ENCODE measurements at regions of chr22 and their contacts with region 1.

Region 1: GRCh38 chr22:30116362-30117117 is 36.3 kb downstream of the HORMAD2 start:
- DNase-seq: no peak
- H3K4me3 ChIP-seq: no peak overlapping the region
- H3K27ac ChIP-seq: no peak overlapping the region
- H3K4me1 ChIP-seq: no peaks in the 10 kb centered on the region
- H3K27me3 ChIP-seq: no peaks in the 10 kb centered on the region
- CTCF ChIP-seq: no peak
- EP300 ChIP-seq: no peak
- POLR2A ChIP-seq: no peak

Region 2: DNA sequence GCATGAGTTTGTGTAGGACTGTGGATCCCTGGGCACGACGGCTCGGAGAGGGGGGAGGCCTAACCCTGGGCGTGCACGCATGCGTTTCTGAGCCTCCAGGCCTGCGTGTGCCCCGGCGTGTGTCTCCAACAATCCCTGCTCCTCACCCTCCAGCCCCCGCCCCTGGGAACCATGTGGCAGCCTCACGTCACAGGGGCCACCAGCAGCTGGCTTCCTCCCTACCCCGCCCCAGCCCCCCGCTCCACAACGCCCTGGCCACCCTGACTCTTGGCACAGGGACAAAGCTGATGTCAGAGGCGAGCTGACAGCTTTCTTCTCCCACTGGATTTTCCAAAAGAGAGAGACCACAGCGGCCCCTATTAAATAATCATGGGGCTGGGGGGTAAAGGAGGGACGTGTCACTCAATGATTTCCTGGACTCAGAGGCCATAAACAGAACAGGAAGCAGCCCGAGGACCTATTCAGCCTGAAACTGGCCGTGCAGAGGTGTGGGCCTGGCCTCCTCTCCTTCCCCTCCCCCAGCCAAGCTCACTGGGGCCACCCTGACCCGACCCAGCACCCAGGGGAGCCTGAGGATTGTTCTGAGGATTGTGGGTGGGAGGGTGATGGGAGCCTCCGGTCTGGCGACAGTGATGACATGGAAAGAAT is 136.8 kb after region 1 on chr22:
- in situ Hi-C with region 1: no loop called
- intact Hi-C with region 1: loop called (anchors 5 kb)
- DNase-seq: peak; percentile 82
- H3K4me3 ChIP-seq: no peak overlapping the region
- H3K27ac ChIP-seq: peak overlapping the region; percentile 68 to 82 (median 77)
- H3K4me1 ChIP-seq: peaks cover 19 to 52% (median 39%) of the 10 kb centered on the region in 4 donors
- H3K27me3 ChIP-seq: no peaks in the 10 kb centered on the region
- CTCF ChIP-seq: no peak
- EP300 ChIP-seq: no peak
- POLR2A ChIP-seq: peak; percentile 18

Region 3: GRCh38 chr22:30356449-30357235 is 240.1 kb after region 1 on chr22 and contains the starts of genes CCDC157 and SF3A1:
- in situ Hi-C with region 1: loop called in 1 of 4 experiments (anchors 25 kb)
- intact Hi-C with region 1: no loop called
- DNase-seq: peak; percentile 90
- H3K4me3 ChIP-seq: peak within 1 kb of the TSS; percentile 55 to 84 (median 70)
- H3K27ac ChIP-seq: peak within 1 kb of the TSS; percentile 94 to 96 (median 95)
- H3K4me1 ChIP-seq: peaks cover 15 to 34% (median 25%) of the 10 kb centered on the region in 4 donors
- H3K27me3 ChIP-seq: no peaks in the 10 kb centered on the region
- CTCF ChIP-seq: peak in 1 of 5 experiments; percentile 27
- EP300 ChIP-seq: no peak
- POLR2A ChIP-seq: peak; percentile 88
- total RNA-seq, gene CCDC157: 1.4 to 5.2 (median 3.3) TPM
- total RNA-seq, gene SF3A1: 73.2 to 664 (median 99.3) TPM

Region 4: DNA sequence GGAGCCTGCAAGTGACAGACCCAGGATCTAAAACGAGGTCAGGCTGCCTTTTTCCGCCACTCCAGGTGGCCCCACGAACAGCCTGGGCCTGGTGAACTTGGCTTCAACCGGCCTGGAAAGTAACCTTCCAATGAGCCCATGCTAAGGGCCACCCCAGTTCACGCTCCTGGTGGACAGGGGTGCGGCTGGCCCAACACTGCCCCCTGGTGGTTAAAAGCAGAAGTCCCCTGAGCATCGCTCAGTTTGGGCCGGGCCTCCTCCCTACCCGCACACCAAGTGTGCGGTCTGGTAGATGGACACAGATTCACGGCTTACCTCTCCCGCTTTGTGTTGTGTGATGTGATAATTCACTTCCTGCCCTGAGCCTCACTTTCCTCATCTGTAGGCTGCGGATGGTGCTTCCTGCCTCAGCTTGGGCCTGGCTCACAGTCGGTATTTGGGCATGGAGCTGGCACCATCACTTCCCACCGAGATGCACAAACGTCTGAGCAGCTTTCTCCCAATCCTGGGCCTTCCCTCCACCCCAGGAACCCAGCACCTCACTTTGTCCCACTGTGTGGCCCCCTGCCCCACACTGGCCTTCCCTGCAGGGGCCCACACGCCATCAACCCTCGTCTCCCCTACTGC is 368.9 kb after region 1 on chr22:
- in situ Hi-C with region 1: loop called in 1 of 4 experiments (anchors 25 kb)
- intact Hi-C with region 1: no loop called
- DNase-seq: peak; percentile 72
- H3K4me3 ChIP-seq: no peak overlapping the region
- H3K27ac ChIP-seq: no peak overlapping the region
- H3K4me1 ChIP-seq: no peaks in the 10 kb centered on the region
- H3K27me3 ChIP-seq: no peaks in the 10 kb centered on the region
- CTCF ChIP-seq: peak; percentile 95 to 98 (median 95)
- EP300 ChIP-seq: no peak
- POLR2A ChIP-seq: no peak